ENCODE measurements at regions of chr1 and their contacts with region 1.

Region 1: DNA sequence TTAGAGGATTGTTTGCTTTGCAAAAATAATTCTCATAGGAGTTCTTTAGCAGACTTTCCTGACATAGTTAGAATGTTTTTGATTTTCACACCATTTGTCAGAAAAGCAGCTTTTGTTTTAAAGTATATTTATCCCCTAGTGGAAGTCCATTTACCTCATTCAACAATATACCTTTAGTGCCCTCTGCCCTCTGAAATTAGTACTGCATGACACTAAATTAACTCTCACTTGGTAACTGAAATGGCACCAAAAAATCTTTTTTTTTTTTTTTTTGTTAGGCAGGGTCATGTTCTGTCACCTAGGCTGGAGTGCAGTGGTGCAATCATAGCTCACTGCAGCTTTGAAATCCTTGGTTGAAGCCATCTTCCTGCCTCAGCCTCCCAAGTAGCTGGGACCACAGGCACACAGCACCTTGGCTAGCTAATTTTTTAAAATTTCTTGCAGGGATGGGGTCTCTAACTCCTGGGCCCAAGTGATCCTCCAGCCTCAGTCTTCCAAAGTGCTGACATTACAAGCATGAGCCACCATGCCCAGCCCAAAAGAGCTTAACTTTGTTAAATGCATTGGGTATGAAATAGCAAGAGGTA is 13.6 kb downstream of the LRRC42 start:
- DNase-seq: peak; percentile 44
- ATAC-seq: no peak
- H3K4me3 Mint-ChIP-seq: no peak overlapping the region
- H3K27ac Mint-ChIP-seq: no peak overlapping the region
- H3K4me1 Mint-ChIP-seq: peaks cover 15% of the 10 kb centered on the region
- H3K27me3 Mint-ChIP-seq: no peaks in the 10 kb centered on the region

Region 2: DNA sequence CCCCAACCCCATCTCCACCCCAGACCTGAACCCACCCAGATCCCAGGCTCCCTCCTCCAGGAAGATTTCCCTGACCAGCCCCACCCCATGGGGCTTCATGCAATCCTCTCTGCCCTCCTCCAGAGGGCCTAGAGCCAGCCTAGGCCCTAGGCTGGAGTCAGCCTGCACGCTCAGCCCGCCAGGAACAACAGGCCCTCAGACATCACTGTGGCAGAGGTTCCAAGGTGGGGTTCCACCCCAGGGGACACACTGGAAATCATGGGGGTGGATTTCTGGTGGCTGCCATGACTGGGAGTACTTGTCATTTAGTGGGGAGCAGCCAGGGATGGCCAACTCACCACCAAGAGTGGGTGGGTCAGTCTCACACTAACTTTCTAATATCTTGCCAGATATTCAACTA is 342.8 kb before region 1 on chr1:
- CTCF ChIA-PET with region 1: no interaction called
- POLR2A ChIA-PET with region 1: no interaction called
- DNase-seq: no peak
- ATAC-seq: no peak
- H3K4me3 Mint-ChIP-seq: no peak overlapping the region
- H3K27ac Mint-ChIP-seq: no peak overlapping the region
- H3K4me1 Mint-ChIP-seq: no peaks in the 10 kb centered on the region
- H3K27me3 Mint-ChIP-seq: peaks cover 2% of the 10 kb centered on the region

Region 3: GRCh38 chr1:53847980-53848379 is 111.8 kb before region 1 on chr1:
- CTCF ChIA-PET with region 1: interaction called, 17 read pairs
- POLR2A ChIA-PET with region 1: no interaction called
- DNase-seq: no peak
- ATAC-seq: no peak
- H3K4me3 Mint-ChIP-seq: no peak overlapping the region
- H3K27ac Mint-ChIP-seq: no peak overlapping the region
- H3K4me1 Mint-ChIP-seq: no peaks in the 10 kb centered on the region
- H3K27me3 Mint-ChIP-seq: peaks cover 2% of the 10 kb centered on the region

Region 4: DNA sequence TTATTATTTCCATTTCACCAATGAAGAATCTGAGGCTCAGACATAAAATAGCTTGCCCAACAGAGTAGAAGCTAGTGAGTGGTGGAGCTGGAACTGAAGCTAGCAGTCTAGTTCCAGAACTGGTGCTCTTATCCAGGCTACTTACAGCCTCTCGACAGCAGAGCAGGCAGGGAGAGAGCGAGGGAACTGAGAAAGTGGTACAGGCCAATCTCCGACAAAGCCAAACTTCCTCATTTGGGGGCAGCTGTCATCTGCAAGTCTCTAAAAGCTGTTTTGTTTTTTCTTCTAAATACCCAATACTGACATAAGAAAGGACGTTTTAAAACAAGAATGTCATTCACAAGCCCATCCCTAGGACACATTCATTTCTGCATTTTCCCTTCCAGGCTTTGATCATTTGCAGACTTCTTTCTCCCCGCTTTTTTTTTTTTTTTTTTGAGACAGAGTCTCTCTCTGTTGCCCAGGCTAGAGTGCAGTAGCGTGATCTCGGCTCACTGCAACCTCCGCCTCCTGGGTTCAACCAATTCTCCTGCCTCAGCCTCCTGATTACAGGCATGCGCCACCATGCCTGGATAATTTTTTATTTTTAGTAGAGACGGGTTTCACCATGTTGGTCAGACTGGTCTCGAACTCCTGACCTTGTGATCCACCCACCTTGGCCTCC is 90.2 kb before region 1 on chr1:
- CTCF ChIA-PET with region 1: interaction called, 179 read pairs
- POLR2A ChIA-PET with region 1: no interaction called
- DNase-seq: no peak
- ATAC-seq: no peak
- H3K4me3 Mint-ChIP-seq: no peak overlapping the region
- H3K27ac Mint-ChIP-seq: no peak overlapping the region
- H3K4me1 Mint-ChIP-seq: no peaks in the 10 kb centered on the region
- H3K27me3 Mint-ChIP-seq: no peaks in the 10 kb centered on the region

Region 5: GRCh38 chr1:53878492-53879105 is 81.2 kb before region 1 on chr1:
- CTCF ChIA-PET with region 1: interaction called, 60 read pairs
- POLR2A ChIA-PET with region 1: no interaction called
- DNase-seq: no peak
- ATAC-seq: no peak
- H3K4me3 Mint-ChIP-seq: no peak overlapping the region
- H3K27ac Mint-ChIP-seq: no peak overlapping the region
- H3K4me1 Mint-ChIP-seq: no peaks in the 10 kb centered on the region
- H3K27me3 Mint-ChIP-seq: no peaks in the 10 kb centered on the region

Region 6: DNA sequence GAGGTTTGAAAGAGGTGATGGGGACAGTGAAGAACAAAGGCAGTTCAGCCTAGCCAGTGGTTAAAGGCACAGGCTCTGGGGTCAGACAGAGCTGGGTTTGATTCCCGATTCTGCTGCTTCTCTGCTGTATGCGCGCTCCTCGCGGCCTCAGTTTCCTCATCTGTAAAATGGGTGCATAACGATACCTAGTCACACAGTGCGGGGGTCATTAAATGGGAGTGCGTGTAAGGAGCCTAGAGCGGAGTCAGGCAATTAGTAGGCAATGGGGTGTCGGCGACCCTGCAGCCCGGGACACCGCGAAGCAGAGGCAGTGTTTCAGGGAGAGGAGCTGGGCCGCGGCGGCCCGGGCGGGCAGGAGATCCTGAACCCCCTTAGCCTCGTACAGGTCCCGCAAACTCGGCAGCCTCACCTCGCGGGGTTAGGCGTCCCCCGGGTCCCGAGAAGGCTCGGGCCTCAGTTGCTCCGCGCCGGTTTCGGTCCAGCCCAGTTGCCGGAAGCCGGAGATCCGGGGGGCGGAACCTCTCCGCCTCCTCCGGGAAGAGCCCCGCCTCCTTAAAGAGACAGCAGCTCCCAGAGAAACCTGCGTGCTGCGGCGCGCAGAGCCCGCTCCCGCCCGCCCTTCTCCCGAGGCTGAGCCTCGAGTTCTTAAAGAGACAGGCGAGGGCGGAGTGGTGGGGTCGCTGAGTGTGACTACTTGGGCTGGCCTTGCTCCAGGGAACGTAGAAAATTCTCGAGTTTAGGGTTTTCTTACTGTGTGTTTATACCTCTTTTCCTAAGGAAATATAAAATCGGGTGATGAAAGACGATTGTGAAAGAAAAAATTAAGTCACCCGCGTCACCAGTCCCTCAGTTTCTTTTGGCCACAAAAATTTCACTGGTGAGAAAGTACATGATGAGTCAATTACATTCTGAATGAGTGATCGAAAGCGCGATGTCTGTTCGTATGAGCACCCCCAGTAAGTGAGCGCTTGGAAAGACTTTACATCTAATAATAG is 70.2 kb before region 1 on chr1 and contains the start of gene YIPF1:
- CTCF ChIA-PET with region 1: interaction called, 11 read pairs
- POLR2A ChIA-PET with region 1: no interaction called
- DNase-seq: peak; percentile 90
- ATAC-seq: peak; percentile 99
- H3K4me3 Mint-ChIP-seq: peak within 1 kb of the TSS; percentile 95
- H3K27ac Mint-ChIP-seq: peak within 1 kb of the TSS; percentile 92
- H3K4me1 Mint-ChIP-seq: peaks cover 27% of the 10 kb centered on the region
- H3K27me3 Mint-ChIP-seq: no peaks in the 10 kb centered on the region
- total RNA-seq, gene YIPF1: 14.9 to 16.3 TPM

Region 7: GRCh38 chr1:53945433-53946251 is 14.1 kb before region 1 on chr1 and contains the start of gene IFT25:
- CTCF ChIA-PET with region 1: interaction called, 54 read pairs
- POLR2A ChIA-PET with region 1: no interaction called
- DNase-seq: peak; percentile 98
- ATAC-seq: peak; percentile 83
- H3K4me3 Mint-ChIP-seq: peak within 1 kb of the TSS; percentile 98
- H3K27ac Mint-ChIP-seq: peak within 1 kb of the TSS; percentile 97
- H3K4me1 Mint-ChIP-seq: peaks cover 48% of the 10 kb centered on the region
- H3K27me3 Mint-ChIP-seq: no peaks in the 10 kb centered on the region
- total RNA-seq, gene IFT25: 83.1 to 87.1 TPM